HCT116 (cell line): ENCODE measurements at regions of chr11 and their contacts with region 1.

Region 1: GRCh38 chr11:45289369-45289768 is 3.2 kb upstream of the SYT13 start:
- DNase-seq: no peak
- ATAC-seq: no peak
- H3K4me3 ChIP-seq: no peak overlapping the region
- H3K27ac ChIP-seq: no peak overlapping the region
- H3K4me1 ChIP-seq: peaks cover 0 to 6% of the 10 kb centered on the region in 2 experiments; a peak in 2 of 4 replicates
- H3K27me3 ChIP-seq: no peaks in the 10 kb centered on the region
- CTCF ChIP-seq: no peak
- POLR2A ChIP-seq: no peak
- RAD21 ChIP-seq: no peak

Region 2: DNA sequence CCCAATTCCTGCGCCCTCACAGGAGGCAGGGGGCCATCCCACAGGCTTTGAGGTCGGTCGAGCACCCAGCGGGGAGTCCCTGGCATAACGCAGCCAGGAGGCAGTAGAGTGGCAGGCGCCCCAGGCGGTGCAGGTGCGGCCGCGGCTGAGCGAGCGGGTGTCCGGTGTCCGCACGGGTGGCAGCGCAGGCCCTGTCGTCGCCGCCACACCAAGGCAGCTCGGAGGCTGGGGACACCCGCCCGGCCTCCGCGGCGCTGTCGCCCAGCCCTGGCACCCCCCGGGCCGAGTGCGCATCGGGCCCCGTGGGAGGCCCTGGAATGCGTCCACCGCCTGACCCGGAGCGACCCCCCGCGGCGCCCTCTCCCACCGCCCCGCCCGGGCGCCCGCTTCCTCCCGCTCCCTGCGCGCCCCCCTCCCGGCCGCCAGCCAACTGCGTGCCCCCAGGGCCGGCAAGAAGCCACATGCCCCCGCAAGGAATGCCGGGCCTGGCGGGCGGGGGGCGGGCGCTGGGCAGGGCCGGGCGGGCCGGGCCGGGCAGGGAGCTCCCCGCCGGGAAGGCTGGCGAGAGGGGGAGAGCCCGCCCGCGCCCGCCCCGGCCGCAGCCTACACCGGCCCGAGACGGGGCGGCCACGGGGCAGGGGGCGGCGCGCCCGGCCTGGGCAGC is 109.1 kb before region 1 on chr11:
- CTCF ChIA-PET with region 1: interaction called, 3 read pairs
- POLR2A ChIA-PET with region 1: no interaction called
- RAD21 ChIA-PET with region 1: no interaction called
- intact Hi-C with region 1: loop called (anchors 1 kb)
- DNase-seq: peak; percentile 16
- ATAC-seq: peak; percentile 84
- H3K4me3 ChIP-seq: peak overlapping the region; percentile 44 to 56
- H3K27ac ChIP-seq: peak overlapping the region; percentile 82
- H3K4me1 ChIP-seq: peaks cover 27 to 28% of the 10 kb centered on the region in 2 experiments
- H3K27me3 ChIP-seq: no peaks in the 10 kb centered on the region
- CTCF ChIP-seq: peak in 2 of 3 experiments; percentile 54 to 67; a peak in 4 of 6 replicates
- POLR2A ChIP-seq: no peak
- RAD21 ChIP-seq: no peak

Region 3: GRCh38 chr11:45272701-45273100 is 16.7 kb before region 1 on chr11:
- CTCF ChIA-PET with region 1: no interaction called
- POLR2A ChIA-PET with region 1: no interaction called
- RAD21 ChIA-PET with region 1: no interaction called
- intact Hi-C with region 1: no loop called
- DNase-seq: no peak
- ATAC-seq: no peak
- H3K4me3 ChIP-seq: no peak overlapping the region
- H3K27ac ChIP-seq: no peak overlapping the region
- H3K4me1 ChIP-seq: peaks cover 0 to 3% of the 10 kb centered on the region in 2 experiments; a peak in 1 of 4 replicates
- H3K27me3 ChIP-seq: peaks cover 13% of the 10 kb centered on the region; the same call in 1 of the 2 replicates
- CTCF ChIP-seq: no peak
- POLR2A ChIP-seq: no peak
- RAD21 ChIP-seq: no peak